Heart left ventricle (tissue), 16 donors: ENCODE measurements at regions of chr3 and their contacts with region 1.

Region 1: DNA sequence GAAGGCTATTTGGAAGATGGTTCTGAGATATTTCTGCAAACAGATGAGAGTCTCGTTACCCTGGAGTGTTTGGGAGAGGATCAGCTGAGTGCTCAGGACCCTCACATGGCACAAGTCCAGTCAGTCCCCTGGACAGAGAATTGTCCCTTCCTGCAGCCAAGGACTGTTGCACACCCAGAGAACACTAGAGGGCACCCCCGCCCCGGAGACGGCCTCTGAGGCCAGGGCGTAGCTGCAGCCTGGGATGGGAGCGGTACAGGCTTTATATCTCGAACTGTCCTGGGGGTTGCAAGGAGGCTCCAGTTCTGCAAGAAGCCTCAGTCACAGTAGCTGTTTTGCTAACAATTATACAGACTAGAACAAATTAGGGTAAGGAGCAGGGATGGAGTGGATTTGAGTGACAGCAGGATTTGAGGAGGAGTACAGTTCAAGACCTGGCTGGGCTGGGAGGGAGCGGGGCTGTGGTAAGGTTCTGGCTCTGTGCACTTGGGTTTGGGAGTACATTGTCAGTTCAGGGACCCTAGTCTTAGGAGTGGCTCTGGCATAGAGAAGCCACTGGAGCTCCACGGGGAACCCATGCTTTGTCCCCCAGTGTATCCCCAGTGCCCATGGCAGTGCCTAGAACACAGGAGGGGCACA is 67.6 kb upstream of the HACD2 start:
- DNase-seq: peak; percentile 79 to 88 (median 84)
- ATAC-seq: peak; percentile 87 to 95 (median 92)
- H3K4me3 ChIP-seq: no peak overlapping the region
- H3K27ac ChIP-seq: peak overlapping the region; percentile 38 to 84 (median 59)
- H3K4me1 ChIP-seq: peaks cover 0 to 39% (median 18%) of the 10 kb centered on the region in 12 donors
- H3K27me3 ChIP-seq: no peaks in the 10 kb centered on the region
- CTCF ChIP-seq: peak; percentile 88 to 98 (median 94)
- POLR2A ChIP-seq: no peak

Region 2: DNA sequence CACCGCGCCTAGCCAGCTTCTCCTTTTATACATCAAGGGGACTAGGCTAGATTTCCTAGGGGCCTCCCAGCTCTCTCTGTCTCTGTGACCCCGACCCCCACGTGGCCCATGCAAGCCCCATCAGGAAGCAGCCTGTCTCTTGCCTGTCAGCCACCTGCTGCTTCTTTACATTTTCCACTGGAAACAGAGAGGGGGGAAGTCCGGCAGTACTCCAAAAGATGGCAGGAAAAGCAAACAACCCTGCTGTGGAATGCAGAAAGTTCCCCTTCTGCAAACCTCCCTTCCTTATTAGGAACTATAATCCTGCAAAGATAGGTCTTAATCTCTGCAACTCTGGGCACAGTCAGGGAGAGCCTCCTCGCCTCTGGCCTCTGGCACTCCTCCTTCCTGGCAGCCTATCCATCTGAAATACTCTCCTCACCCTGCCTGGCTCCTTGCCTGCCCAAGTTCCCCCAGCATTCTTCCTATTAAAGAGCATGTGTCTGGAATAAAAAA is 20.3 kb before region 1 on chr3:
- intact Hi-C with region 1: no loop called
- DNase-seq: peak in 2 of 5 donors; percentile 42 to 46
- ATAC-seq: peak in 2 of 4 donors; percentile 41 to 45
- H3K4me3 ChIP-seq: no peak overlapping the region
- H3K27ac ChIP-seq: peak overlapping the region in 1 of 12 donors; percentile 83
- H3K4me1 ChIP-seq: peaks cover 0 to 29% (median 4%) of the 10 kb centered on the region in 12 donors
- H3K27me3 ChIP-seq: no peaks in the 10 kb centered on the region
- CTCF ChIP-seq: no peak
- POLR2A ChIP-seq: no peak

Region 3: GRCh38 chr3:123694366-123695145 is 42.1 kb after region 1 on chr3:
- intact Hi-C with region 1: loop called in 2 of 10 experiments (anchors 5 kb)
- DNase-seq: no peak
- ATAC-seq: peak in 2 of 4 donors; percentile 44 to 70
- H3K4me3 ChIP-seq: peak overlapping the region in 3 of 12 donors; percentile 1 to 58 (median 5)
- H3K27ac ChIP-seq: peak overlapping the region; percentile 39 to 90 (median 68)
- H3K4me1 ChIP-seq: peaks cover 4 to 67% (median 45%) of the 10 kb centered on the region in 12 donors
- H3K27me3 ChIP-seq: no peaks in the 10 kb centered on the region
- CTCF ChIP-seq: no peak
- POLR2A ChIP-seq: no peak

Region 4: DNA sequence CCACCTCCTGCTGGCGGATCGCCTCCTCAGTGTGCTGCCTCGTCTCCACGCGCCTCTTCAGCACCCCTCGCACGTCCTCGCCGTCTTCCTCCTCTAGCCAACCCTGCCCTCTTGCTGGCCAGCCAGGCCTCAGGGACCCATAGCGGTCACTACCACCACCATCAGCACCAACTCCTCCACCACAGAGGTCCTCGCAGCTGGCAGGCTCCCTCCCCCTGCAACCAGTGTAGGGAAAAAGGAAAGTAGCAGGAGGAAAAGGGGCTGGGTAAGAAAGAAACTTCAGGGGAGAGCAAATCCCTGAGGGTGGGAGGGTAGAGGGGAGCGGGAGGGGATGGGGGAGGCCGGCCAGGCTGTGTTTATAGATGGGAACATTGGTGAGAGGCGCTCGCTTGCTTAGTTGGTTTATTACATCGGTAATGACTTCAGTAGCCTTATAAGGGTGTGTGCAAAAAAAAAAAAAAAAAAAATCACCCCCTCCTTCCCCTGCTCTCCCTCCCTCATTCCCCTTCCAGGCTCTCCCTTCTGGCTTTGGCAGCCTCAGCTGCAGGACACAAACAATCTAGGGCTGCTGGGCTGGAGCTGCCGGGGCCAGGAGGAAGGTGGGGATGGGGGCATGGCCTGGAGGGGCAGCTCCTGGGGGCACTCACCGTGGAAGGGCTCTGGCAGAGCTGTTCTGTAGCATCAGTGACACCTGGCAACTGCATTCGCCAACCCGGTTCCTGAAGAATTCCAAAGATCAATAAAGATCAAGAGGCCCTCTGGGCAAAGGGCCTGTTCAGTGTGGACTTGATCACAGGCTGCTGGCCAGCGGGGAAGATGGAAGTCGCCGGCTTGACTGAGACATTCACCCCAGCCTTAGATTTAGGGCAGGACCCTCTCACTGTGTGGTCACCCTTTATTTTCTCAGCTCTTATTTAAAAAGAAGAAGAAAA is 48.6 kb after region 1 on chr3:
- intact Hi-C with region 1: loop called (anchors 1 to 10 kb)
- DNase-seq: no peak
- ATAC-seq: peak in 3 of 4 donors; percentile 35 to 59 (median 38)
- H3K4me3 ChIP-seq: peak overlapping the region in 11 of 12 donors; percentile 9 to 58 (median 42)
- H3K27ac ChIP-seq: peak overlapping the region in 8 of 12 donors; percentile 3 to 90 (median 46)
- H3K4me1 ChIP-seq: peaks cover 0 to 21% (median 8%) of the 10 kb centered on the region in 12 donors
- H3K27me3 ChIP-seq: no peaks in the 10 kb centered on the region
- CTCF ChIP-seq: no peak
- POLR2A ChIP-seq: no peak

Region 5: GRCh38 chr3:123716411-123716810 is 63.9 kb after region 1 on chr3:
- intact Hi-C with region 1: loop called in 5 of 10 experiments (anchors 1 to 5 kb)
- DNase-seq: no peak
- ATAC-seq: no peak
- H3K4me3 ChIP-seq: no peak overlapping the region
- H3K27ac ChIP-seq: no peak overlapping the region
- H3K4me1 ChIP-seq: peaks cover 0 to 35% (median 19%) of the 10 kb centered on the region in 12 donors
- H3K27me3 ChIP-seq: no peaks in the 10 kb centered on the region
- CTCF ChIP-seq: no peak
- POLR2A ChIP-seq: no peak

Region 6: DNA sequence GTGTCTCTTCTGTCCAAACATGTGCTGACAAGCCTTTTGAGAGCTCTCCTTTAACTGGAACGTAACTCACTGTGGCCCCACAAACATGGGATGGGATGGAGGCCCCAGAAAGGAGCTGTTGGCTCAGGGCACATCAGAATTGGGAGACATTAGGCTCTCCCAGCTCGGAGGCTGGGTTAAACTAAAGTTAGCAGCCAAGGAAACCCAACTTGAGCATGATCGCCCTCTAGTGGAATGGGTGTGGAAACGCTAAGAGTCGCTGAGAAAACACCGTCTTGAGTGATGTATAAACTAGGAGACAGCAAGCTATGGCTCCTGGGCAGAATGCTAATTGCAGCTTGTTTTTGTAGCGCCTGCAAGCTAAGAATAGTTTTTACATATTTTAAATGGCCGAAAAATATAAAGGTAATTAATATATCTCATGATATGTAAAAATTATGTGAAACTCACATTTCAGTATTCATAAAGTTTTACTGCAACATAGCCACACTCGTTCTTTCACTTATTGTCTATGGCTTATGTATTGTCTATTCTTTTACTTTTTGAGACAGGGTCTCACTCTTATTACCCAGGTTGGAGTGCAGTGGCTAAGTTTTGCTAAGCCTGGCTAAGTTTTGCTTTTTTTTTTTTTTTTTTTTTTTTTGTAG is 71.2 kb after region 1 on chr3:
- intact Hi-C with region 1: loop called in 9 of 10 experiments (anchors 1 to 5 kb)
- DNase-seq: peak in 3 of 5 donors; percentile 44 to 58 (median 54)
- ATAC-seq: peak in 3 of 4 donors; percentile 39 to 41 (median 41)
- H3K4me3 ChIP-seq: peak overlapping the region in 1 of 12 donors; percentile 21
- H3K27ac ChIP-seq: peak overlapping the region in 1 of 12 donors; percentile 32
- H3K4me1 ChIP-seq: peaks cover 0 to 34% (median 19%) of the 10 kb centered on the region in 12 donors
- H3K27me3 ChIP-seq: no peaks in the 10 kb centered on the region
- CTCF ChIP-seq: peak; percentile 70 to 89 (median 82)
- POLR2A ChIP-seq: no peak

Region 7: DNA sequence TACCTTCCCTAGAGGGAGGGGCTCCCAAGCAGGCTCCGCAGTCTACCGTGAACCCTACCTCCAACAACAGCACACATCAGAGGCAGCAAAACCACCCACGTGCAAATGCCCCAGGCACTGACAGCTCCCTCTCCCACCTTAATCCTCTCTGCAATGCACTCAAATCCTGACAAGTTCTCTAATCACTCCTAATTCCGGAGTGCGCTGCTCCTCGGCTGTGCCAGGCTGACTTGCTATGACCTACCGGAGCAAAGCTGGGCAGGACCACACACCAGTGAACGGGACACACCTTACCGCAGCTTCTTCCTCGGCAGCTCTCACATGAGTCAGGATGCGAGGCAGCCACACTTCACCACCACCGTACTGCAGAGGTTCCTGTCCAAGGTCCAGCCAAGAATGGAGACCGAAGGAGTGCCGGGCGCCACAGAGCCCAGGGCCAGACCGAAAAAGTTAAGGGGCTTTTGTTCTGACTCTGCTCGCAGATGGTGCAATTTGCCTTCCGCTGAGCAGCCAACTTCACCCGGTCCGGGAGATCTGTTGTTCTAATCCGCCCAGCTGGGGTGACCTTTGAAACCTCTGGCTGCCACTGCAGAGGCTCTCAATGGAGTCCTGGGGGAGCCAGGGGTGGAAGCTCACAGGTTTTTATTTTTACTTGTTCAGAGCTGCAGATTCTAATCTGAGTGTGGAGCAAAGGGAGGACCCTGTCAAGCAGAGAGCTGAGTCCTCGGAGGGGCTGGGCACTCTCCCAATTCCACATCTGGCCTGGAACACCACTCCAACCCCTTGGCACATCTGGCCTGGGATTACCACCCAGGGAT is 147.3 kb after region 1 on chr3:
- intact Hi-C with region 1: no loop called
- DNase-seq: no peak
- ATAC-seq: peak in 2 of 4 donors; percentile 29 to 31
- H3K4me3 ChIP-seq: peak overlapping the region in 1 of 12 donors; percentile 13
- H3K27ac ChIP-seq: no peak overlapping the region
- H3K4me1 ChIP-seq: peaks cover 0 to 10% (median 0%) of the 10 kb centered on the region in 12 donors
- H3K27me3 ChIP-seq: no peaks in the 10 kb centered on the region
- CTCF ChIP-seq: no peak
- POLR2A ChIP-seq: no peak

Region 8: DNA sequence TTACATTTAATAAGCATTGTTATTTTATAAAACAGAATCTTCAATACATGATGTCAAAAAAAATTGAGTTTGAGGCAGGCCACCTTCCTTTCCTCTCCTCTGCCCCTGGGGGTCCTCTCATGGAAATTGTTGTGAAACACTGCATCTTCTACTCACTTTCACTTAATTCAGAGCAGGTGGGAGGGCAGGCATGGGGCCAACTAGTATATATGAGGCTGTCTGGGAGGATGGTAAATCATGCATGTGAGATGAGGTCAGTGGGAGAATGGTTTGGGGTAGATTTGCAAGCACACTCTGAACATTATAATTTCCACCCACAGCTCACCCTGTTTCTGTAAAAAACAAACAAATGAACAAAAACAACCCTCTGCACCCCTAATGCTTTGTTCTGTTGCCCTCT is 318.9 kb after region 1 on chr3:
- intact Hi-C with region 1: loop called in 1 of 10 experiments (anchors 5 kb)
- DNase-seq: no peak
- ATAC-seq: no peak
- H3K4me3 ChIP-seq: no peak overlapping the region
- H3K27ac ChIP-seq: no peak overlapping the region
- H3K4me1 ChIP-seq: no peaks in the 10 kb centered on the region
- H3K27me3 ChIP-seq: peaks cover 0 to 11% (median 0%) of the 10 kb centered on the region in 9 donors
- CTCF ChIP-seq: no peak
- POLR2A ChIP-seq: no peak